OCI-LY7 (cell line): ENCODE measurements at regions of chr11 and their contacts with region 1.

Region 1: GRCh38 chr11:99452076-99452475 is 431.3 kb downstream of the CNTN5 start:
- DNase-seq: no peak
- H3K4me3 ChIP-seq: no peak overlapping the region
- H3K27ac ChIP-seq: no peak overlapping the region
- H3K4me1 ChIP-seq: no peaks in the 10 kb centered on the region
- CTCF ChIP-seq: no peak

Region 2: DNA sequence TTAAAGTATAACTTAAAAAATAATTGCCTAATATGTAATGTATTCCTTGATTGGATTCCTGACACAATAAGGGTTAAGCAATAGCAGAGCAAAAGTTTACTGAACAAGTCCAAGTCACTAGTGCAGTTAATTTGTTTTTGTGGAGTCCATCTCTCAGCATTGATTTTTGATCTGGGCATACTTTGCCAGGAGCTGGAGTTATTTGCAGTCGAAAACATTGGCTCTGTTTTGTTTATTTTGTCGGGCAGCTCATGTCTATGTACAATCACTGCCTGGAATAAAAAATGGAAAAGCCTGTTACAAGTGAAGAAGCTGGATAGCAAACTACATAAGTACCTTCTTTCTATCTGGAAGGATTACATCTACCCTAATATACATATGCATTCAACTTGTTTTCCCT is 193.9 kb after region 1 on chr11:
- CTCF ChIA-PET with region 1: no interaction called
- POLR2A ChIA-PET with region 1: interaction called, 10 read pairs
- intact Hi-C with region 1: no loop called
- DNase-seq: no peak
- H3K4me3 ChIP-seq: no peak overlapping the region
- H3K27ac ChIP-seq: no peak overlapping the region
- H3K4me1 ChIP-seq: no peaks in the 10 kb centered on the region
- CTCF ChIP-seq: no peak